ENCODE measurements at regions of chr20 and their contacts with region 1.

Region 1: GRCh38 chr20:36562724-36563123 is 10.7 kb upstream of the TGIF2 start:
- DNase-seq: no peak
- H3K4me3 Mint-ChIP-seq: no peak overlapping the region
- H3K27ac Mint-ChIP-seq: no peak overlapping the region
- H3K4me1 Mint-ChIP-seq: no peaks in the 10 kb centered on the region
- H3K27me3 Mint-ChIP-seq: no peaks in the 10 kb centered on the region

Region 2: DNA sequence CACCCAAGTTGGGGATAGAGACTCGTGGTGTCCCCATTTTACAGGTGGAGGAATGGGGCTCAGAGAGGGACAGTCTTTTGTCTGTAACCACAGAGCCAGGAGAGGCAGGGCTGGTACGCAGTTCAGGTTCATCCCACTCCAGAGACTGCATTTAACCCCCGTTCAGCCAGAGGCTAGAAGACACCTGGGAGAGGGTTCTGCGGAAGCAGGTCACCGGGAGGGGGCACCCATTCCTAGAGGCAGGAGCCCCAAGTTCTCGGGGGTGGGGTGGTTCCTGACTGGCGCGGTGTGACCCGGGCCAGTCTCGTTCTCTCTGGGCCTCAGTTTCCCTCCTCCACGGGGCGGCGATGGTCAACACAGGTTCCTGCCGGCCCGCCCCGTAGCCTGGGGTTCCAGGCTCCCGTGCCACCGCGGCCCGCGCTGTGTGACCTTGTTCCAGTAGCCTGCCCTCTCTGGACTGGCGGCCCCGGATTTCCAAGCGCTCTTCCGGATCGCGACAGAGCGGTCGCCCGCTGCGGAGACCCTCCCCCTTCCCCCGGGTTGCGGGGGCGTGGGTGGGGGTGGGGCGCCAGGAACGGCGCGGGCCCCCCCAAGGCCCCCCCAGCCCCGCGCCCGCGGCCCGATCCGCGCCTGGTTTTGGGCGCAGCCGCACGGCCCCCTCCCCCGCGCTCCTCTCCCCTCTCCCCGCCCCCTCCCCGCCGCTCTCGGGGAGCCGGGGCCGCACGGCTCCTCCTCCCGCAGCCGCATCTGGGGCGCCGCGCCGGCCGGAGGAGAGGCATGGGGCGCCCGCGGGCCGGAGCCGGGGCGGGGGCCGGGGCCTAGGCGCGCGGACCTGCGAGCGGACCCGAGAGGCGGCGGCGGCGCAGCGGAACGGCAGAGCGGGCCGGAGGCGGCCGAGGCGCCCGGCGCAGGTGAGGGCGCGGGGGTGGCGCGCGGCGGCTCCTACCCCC is 256.8 kb before region 1 on chr20 and contains the start of gene DLGAP4:
- CTCF ChIA-PET with region 1: no interaction called
- intact Hi-C with region 1: no loop called
- DNase-seq: peak; percentile 27
- H3K4me3 Mint-ChIP-seq: peak within 1 kb of the TSS; percentile 61
- H3K27ac Mint-ChIP-seq: no peak within 1 kb of the TSS
- H3K4me1 Mint-ChIP-seq: peaks cover 2% of the 10 kb centered on the region
- H3K27me3 Mint-ChIP-seq: peaks cover 62% of the 10 kb centered on the region
- total RNA-seq, gene DLGAP4: 9.2 to 13.7 TPM

Region 3: DNA sequence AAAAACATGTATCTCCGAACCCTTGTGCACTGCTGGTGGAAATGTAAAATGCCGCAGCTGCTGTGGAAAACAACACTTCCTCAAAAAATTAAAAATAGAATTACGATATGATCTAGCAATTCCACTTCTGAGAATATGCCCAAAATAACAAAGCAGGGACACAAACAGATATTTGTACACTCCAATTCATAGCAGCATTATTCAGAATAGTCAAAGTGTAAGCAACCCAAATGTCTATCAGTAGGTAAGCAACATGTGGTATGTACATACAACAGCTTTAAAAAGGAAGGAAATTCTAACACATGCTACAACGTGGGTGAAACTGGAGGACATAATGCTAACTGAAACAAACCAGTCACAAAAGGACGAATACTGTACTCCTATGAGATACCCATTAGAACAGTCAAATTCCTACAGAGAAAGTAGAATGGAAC is 37.2 kb after region 1 on chr20:
- CTCF ChIA-PET with region 1: interaction called, 11 read pairs
- intact Hi-C with region 1: no loop called
- DNase-seq: no peak
- H3K4me3 Mint-ChIP-seq: no peak overlapping the region
- H3K27ac Mint-ChIP-seq: no peak overlapping the region
- H3K4me1 Mint-ChIP-seq: peaks cover 21% of the 10 kb centered on the region
- H3K27me3 Mint-ChIP-seq: no peaks in the 10 kb centered on the region